Endothelial cell of umbilical vein (primary cell): ENCODE measurements at regions of chr10 and their contacts with region 1.

Region 1: DNA sequence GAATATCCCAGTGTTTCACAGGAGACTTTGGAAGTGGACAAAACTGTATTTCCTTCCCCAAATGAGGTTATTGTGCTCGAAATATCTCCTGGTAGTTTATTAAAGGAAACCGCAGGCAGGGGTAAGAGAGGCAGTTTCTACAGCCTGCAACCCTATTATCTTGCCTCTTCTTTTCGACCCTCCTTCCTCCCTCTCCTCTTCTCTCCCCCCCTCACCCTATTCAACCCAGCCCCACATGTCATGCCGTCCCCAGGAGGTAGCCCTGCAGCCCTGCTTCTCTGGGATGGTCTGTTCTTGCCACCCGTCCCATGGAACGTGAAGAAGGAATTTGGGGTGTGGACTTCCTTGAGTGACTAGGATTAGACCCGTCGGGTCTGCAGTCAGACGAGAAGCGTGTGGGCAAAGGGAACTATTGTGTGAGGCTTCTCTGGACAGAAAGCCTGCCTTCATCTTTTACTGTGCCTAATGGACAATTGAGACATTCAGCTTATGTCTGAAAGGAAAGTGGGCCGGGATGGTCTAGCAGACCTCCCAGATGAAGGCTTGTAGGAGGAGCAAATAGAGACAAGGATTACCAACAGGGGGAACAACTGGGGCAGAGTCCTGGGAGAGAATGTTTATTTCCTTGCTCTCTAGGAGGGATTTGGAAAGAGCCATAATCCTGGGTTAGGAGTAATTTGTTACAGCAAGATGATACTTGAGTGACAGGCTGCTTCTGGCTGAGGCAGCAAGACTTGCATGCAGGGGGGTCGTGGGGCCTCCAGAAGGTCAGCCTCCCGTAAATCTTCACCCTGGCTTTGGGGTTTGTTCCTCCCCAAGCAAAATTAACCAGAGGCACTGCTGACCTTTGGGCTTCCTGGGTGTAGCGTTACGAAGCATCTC is 77.8 kb downstream of the TCF7L2 start:
- DNase-seq: peak; percentile 31
- H3K4me3 ChIP-seq: peak overlapping the region in 1 of 3 experiments; percentile 4
- H3K27ac ChIP-seq: peak overlapping the region; percentile 15
- H3K4me1 ChIP-seq: peaks cover 19% of the 10 kb centered on the region
- H3K27me3 ChIP-seq: no peaks in the 10 kb centered on the region
- CTCF ChIP-seq: no peak
- POLR2A ChIP-seq: no peak

Region 2: DNA sequence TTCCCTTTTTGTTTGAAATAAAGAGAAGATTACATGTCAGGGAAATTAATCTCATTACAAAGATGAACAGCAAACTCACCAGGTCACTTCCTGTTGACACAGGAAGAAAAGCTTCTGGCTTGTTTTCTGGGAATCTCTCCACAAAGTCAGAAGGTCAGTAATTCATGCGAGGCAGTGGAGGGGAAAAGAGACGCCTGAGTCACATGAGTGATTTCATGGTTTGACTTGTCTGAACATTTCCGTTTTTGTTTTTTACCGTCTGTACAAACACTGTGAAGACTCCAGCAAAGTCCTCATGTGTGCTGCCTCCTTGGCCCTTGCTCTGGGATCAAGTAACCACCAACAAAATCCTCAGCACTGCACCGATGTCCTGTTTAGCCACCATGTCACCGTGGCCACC is 522.5 kb after region 1 on chr10:
- CTCF ChIA-PET with region 1: no interaction called
- POLR2A ChIA-PET with region 1: no interaction called
- dilution Hi-C with region 1: no loop called
- intact Hi-C with region 1: loop called (anchors 10 kb)
- DNase-seq: peak; percentile 86
- H3K4me3 ChIP-seq: no peak overlapping the region
- H3K27ac ChIP-seq: peak overlapping the region; percentile 73
- H3K4me1 ChIP-seq: peaks cover 31% of the 10 kb centered on the region
- H3K27me3 ChIP-seq: no peaks in the 10 kb centered on the region
- CTCF ChIP-seq: no peak
- POLR2A ChIP-seq: no peak